HEK293T (cell line): ENCODE measurements at regions of chr10 and their contacts with region 1.

Region 1: DNA sequence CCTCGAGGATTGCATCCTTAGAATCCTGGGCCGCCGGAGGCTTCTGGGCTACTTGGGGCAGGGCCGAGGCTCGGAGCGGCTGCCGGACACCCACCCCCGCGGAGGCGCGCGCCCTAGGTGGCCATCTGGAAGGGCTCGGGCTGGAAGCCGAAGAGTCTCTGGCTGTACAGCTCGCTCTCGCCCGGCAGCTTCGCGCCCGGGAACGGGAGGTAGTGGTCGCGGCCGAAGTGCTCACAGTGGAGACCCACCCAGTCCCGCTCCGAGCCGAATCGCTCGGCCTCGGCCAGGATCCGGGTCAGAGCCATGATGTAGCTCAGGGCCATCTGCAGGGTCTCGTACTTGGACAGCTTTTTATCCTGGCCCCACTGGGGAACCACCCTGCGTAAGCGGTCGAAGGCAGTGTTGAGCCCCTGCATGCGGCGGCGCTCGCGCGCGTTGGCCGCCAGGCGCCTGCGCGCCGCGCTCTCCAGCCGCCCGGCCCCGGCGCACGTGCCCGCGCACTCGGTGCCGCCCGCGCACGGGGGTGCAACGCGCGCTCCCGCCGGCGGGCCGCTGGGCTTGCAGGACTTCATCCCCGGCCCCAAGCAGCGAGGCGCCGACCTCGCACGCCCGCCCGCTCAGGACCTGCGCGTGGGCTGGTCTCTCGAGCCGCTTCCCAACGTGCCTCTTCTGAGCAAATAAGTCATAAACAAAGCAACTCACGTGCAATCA is 652 bp downstream of the ATOH7 start:
- DNase-seq: peak; percentile 90

Region 2: DNA sequence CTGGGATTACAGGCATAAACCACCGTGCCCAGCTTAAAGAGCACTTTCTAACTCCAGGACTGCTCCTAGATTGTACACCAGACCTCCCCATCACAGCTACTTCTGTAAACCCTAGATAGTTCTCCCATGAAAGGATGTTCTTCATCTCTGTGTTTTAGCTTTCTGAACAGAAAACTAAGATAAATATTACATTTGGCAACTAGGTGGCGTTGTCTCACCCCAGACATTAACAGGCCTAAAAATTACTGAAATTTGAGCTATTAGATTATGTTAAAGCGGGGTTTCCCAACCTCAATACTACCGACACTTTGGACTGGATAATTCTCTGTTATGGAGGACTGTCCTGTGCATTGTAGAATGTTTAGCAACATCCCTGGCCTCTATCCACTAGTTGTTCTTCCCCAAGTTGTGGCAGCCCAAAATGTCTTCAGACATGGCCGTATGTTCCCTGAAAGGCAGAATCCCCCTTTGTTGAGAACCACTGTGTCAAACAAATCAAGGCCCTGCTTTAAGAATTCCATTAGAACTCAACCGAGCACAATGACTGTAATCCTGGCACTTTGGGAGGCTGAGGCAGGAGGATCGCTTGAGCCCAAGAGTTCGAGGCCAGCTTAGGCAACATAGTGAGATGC is 18.4 kb before region 1 on chr10:
- CTCF ChIA-PET with region 1: interaction called, 10 read pairs
- POLR2A ChIA-PET with region 1: no interaction called
- DNase-seq: peak; percentile 33

Region 3: DNA sequence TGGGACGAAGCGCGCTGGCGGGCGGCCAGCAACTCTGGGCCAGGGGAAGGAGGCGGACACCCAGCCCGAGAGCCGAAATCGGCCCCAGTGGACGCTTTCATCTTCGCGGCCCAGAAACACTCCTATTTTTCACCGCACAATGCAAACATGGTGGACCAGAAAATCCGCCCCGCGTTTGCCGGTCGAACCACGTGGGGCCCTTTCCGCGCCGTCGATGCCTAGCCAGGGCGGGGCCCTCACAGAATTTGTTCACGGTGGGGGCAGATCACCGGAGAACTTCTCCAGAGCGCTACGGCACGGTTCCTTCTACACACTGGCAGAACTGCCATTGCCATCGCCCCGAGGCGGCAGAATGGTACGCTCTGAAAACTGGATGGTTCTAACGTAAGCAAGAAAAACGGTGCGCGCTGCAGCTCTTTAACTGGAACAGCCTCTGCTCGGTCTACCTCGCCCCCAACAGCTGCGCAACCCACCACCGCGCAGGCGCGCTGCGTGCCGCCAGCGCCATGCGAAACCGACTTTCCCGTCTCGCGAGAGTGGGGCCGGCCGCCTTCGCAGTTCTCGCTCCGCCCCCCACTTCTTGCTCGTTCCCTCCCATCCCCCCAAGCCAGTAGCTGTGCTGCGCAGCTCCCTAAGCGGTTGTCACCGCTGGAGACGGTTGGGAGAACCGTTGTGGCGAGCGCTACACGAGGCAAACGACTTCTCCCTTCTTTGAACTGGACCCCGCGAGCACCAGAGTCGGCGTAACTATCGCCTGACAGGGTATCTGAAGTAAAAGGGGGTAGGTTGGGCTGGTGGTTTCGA is 100.4 kb after region 1 on chr10 and contains the start of gene HNRNPH3:
- CTCF ChIA-PET with region 1: interaction called, 3 read pairs
- POLR2A ChIA-PET with region 1: interaction called, 30 read pairs
- DNase-seq: peak; percentile 97